Activated B cell treated with CpG ODN at 0.5 μM for 24 hours (primary cell): ENCODE measurements at regions of chrX and their contacts with region 1.

Region 1: GRCh38 chrX:77899081-77899828 is at the start of gene COX7B:
- DNase-seq: no peak
- ATAC-seq: peak; percentile 71
- H3K4me3 Mint-ChIP-seq: peak within 1 kb of the TSS; percentile 94
- H3K27ac Mint-ChIP-seq: peak within 1 kb of the TSS; percentile 95
- H3K4me1 Mint-ChIP-seq: peaks cover 27% of the 10 kb centered on the region
- H3K27me3 Mint-ChIP-seq: no peaks in the 10 kb centered on the region
- CTCF ChIP-seq: no peak
- total RNA-seq, gene COX7B: 196 and 235 TPM in 2 replicates

Region 2: GRCh38 chrX:76427560-76428242 is 1471.6 kb before region 1 on chrX and contains the start of gene MAGEE1:
- CTCF ChIA-PET with region 1: no interaction called
- POLR2A ChIA-PET with region 1: no interaction called
- intact Hi-C with region 1: loop called (anchors 5 kb)
- DNase-seq: peak; percentile 70
- ATAC-seq: peak; percentile 83
- H3K4me3 Mint-ChIP-seq: peak within 1 kb of the TSS; percentile 91
- H3K27ac Mint-ChIP-seq: peak within 1 kb of the TSS; percentile 76
- H3K4me1 Mint-ChIP-seq: peaks cover 11% of the 10 kb centered on the region
- H3K27me3 Mint-ChIP-seq: no peaks in the 10 kb centered on the region
- CTCF ChIP-seq: no peak
- total RNA-seq, gene MAGEE1: 3.1 and 3.3 TPM in 2 replicates

Region 3: DNA sequence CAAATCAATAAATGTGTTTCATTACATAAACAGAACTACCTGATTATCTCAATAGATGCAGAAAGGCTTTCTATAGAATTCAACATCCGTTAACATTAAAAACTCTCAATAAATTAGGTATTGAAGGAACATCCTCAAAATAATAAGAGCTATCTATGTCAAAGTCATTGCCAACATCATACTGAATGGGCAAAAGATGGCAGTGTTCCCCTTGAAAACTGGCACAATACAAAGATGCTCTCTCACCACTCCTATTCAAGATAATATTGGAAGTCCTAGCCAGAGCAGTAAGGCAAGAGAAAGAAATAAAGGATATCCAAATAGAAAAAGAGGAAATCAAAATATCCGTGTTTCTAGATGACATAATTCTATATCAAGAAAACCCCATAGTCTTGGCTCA is 1005.3 kb before region 1 on chrX:
- CTCF ChIA-PET with region 1: no interaction called
- POLR2A ChIA-PET with region 1: no interaction called
- intact Hi-C with region 1: no loop called
- DNase-seq: no peak
- ATAC-seq: no peak
- H3K4me3 Mint-ChIP-seq: no peak overlapping the region
- H3K27ac Mint-ChIP-seq: no peak overlapping the region
- H3K4me1 Mint-ChIP-seq: no peaks in the 10 kb centered on the region
- H3K27me3 Mint-ChIP-seq: no peaks in the 10 kb centered on the region
- CTCF ChIP-seq: no peak

Region 4: DNA sequence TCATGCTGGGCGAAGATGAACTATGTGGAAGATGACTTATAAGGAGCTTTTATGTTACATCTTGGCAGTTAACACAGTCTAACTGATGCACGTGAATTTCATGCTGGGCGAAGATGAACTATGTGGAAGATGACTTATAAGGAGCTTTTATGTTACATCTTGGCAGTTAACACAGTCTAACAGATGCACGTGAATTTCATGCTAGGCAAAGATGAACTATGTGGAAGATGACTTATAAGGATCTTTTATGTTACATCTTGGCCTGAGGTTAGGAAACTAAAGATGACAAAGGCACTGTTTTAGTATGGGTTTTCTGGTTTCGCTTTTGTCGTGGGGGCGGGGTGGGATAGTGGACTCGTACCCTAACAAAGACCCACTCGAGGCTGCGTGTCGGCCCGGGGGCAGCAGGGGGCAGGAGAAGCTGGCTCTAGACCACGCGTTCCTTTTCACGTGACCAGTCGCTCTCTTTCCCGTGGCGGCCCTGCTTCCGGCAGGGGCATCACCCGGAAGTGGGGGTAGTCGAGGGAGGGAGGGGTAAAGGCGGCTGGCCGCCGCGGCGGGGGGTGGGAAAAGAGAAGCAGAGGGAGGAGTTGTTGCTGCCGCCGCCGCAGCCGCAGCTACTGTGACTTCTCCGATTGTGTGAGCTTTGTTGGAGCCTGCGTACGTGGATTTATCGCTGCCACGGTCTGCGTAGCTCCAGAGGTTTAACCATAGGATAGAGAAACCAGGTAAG is 11.0 kb after region 1 on chrX and contains the start of gene ATP7A:
- CTCF ChIA-PET with region 1: interaction called, 9 read pairs
- POLR2A ChIA-PET with region 1: interaction called, 63 read pairs
- intact Hi-C with region 1: loop called (anchors 1 kb)
- DNase-seq: peak; percentile 72
- ATAC-seq: peak; percentile 92
- H3K4me3 Mint-ChIP-seq: peak within 1 kb of the TSS; percentile 96
- H3K27ac Mint-ChIP-seq: peak within 1 kb of the TSS; percentile 93
- H3K4me1 Mint-ChIP-seq: peaks cover 21% of the 10 kb centered on the region
- H3K27me3 Mint-ChIP-seq: no peaks in the 10 kb centered on the region
- CTCF ChIP-seq: no peak
- total RNA-seq, gene ATP7A: 8.2 and 9.4 TPM in 2 replicates

Region 5: GRCh38 chrX:78103623-78104446 is 204.6 kb after region 1 on chrX and contains the start of gene PGK1:
- CTCF ChIA-PET with region 1: no interaction called
- POLR2A ChIA-PET with region 1: interaction called, 3 read pairs
- intact Hi-C with region 1: loop called (anchors 1 kb)
- DNase-seq: peak; percentile 81
- ATAC-seq: peak; percentile 95
- H3K4me3 Mint-ChIP-seq: peak within 1 kb of the TSS; percentile 87
- H3K27ac Mint-ChIP-seq: peak within 1 kb of the TSS; percentile 90
- H3K4me1 Mint-ChIP-seq: peaks cover 41% of the 10 kb centered on the region
- H3K27me3 Mint-ChIP-seq: peaks cover 2% of the 10 kb centered on the region
- CTCF ChIP-seq: no peak
- total RNA-seq, gene PGK1: 293 and 295 TPM in 2 replicates

Region 6: DNA sequence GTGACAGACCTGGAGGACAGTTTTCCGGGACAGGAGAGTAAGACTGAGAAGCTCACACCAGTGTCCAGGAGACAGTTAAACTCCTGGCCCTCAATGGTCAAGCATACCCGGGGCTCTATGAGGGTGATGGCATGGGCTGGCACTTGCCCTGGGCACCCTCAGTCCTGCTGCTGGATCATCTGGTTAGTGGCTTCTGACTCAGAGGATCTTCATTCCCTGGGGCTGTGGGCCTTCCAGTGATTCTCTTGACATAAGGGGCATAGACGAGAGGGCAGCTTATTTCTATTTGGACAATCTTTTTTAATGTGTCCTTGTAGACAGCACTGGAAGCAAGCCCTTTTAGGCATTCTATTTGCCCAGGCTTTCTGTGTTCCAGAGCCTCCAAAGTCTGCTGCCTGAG is 447.6 kb after region 1 on chrX:
- CTCF ChIA-PET with region 1: no interaction called
- POLR2A ChIA-PET with region 1: no interaction called
- intact Hi-C with region 1: no loop called
- DNase-seq: no peak
- ATAC-seq: no peak
- H3K4me3 Mint-ChIP-seq: no peak overlapping the region
- H3K27ac Mint-ChIP-seq: no peak overlapping the region
- H3K4me1 Mint-ChIP-seq: no peaks in the 10 kb centered on the region
- H3K27me3 Mint-ChIP-seq: no peaks in the 10 kb centered on the region
- CTCF ChIP-seq: no peak

Region 7: DNA sequence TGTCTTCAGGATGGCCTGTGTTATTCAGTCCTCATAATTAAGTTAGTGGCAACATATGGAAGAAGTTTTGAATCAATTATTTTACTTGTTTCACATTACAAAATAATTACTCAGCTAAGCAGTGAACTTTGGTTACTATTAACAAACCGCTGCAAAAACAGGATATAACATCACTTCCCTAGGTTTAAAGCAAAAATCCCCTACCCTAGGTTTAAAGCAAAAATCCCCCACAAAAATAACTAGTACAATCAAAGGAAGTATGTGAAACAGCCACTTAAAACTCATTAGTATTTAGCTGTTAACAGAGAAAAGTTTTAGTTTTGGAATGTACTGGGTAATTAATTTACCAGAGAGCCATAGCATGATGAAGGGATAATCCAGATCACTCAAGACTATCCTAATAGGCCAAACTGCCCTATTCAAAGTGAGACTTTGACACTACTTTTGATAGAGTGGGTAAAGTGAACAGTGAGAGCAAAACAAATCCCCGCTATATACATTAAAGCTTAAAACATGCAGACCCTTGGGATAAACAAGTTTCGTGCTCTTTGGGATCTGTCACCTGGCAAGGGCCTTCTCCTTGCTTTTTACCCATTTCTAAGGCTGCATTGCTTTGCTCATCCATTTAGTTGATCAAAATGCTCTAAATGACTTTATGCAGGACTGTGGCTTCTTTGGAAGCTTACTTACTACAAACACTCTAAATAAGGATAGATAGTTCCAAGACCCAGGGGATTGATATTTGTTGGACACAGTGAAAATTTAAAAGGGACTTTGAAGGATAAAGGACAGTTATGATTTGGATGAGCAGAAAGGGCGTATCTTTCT is 1208.8 kb after region 1 on chrX:
- CTCF ChIA-PET with region 1: no interaction called
- POLR2A ChIA-PET with region 1: no interaction called
- intact Hi-C with region 1: loop called (anchors 10 kb)
- DNase-seq: no peak
- ATAC-seq: peak; percentile 88
- H3K4me3 Mint-ChIP-seq: peak overlapping the region; percentile 52
- H3K27ac Mint-ChIP-seq: peak overlapping the region; percentile 95
- H3K4me1 Mint-ChIP-seq: peaks cover 42% of the 10 kb centered on the region
- H3K27me3 Mint-ChIP-seq: no peaks in the 10 kb centered on the region
- CTCF ChIP-seq: no peak

Region 8: GRCh38 chrX:79259073-79259689 is 1359.9 kb after region 1 on chrX:
- CTCF ChIA-PET with region 1: no interaction called
- POLR2A ChIA-PET with region 1: no interaction called
- intact Hi-C with region 1: loop called (anchors 5 kb)
- DNase-seq: no peak
- ATAC-seq: peak; percentile 83
- H3K4me3 Mint-ChIP-seq: peak overlapping the region; percentile 59
- H3K27ac Mint-ChIP-seq: peak overlapping the region; percentile 91
- H3K4me1 Mint-ChIP-seq: peaks cover 72% of the 10 kb centered on the region
- H3K27me3 Mint-ChIP-seq: no peaks in the 10 kb centered on the region
- CTCF ChIP-seq: no peak